ENCODE measurements at regions of chr20 and their contacts with region 1.

Region 1: DNA sequence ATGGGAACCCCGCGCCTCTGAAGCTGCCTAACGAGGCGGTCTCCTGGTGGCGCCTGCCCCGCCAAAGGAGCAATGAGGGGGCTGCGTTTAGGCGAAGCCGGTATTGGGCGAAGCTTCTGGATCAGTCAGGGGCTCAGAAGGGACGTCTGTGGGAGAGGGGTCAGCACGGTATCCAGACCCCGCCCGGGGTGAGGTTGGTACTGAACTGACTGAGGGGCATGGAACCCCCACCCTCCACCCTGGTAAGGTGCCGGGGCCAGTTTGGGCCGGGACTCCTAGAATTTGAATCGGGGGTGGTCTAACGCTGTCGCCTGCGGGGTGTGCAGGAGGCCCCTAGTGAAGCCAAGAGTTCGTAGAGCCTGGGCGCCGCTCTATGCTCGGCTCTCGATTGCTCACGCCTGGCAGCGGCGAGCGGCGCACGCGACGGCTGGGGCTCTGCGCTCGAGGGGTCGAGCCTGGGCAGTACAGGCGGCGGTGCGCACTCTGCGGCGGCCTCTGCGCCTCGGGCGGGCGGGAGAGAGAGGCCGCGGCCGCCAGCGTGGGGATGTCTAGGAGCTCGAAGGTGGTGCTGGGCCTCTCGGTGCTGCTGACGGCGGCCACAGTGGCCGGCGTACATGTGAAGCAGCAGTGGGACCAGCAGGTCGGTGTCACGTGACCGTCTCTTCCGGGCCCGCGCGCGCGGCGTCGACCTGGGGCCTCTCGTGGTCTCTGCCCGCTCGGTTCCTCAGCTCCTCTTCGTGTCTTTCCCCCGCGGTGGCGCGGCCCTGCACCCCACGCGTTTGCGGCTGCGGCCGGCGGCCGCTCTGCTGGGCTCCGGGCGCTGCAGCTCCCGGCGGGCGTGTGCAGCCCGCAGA is at the starts of genes KAT14 and PET117:
- DNase-seq: peak; percentile 93
- ATAC-seq: peak; percentile 97 to 99
- total RNA-seq, gene KAT14: 8.5 to 10.0 TPM
- total RNA-seq, gene PET117: 9.7 to 10.7 TPM

Region 2: GRCh38 chr20:17662333-17663039 is 475.2 kb before region 1 on chr20:
- intact Hi-C with region 1: loop called in 1 of 2 experiments (anchors 5 kb)
- DNase-seq: peak; percentile 73
- ATAC-seq: peak; percentile 67 to 86

Region 3: GRCh38 chr20:17955302-17955701 is 182.3 kb before region 1 on chr20:
- intact Hi-C with region 1: no loop called
- DNase-seq: no peak
- ATAC-seq: no peak

Region 4: DNA sequence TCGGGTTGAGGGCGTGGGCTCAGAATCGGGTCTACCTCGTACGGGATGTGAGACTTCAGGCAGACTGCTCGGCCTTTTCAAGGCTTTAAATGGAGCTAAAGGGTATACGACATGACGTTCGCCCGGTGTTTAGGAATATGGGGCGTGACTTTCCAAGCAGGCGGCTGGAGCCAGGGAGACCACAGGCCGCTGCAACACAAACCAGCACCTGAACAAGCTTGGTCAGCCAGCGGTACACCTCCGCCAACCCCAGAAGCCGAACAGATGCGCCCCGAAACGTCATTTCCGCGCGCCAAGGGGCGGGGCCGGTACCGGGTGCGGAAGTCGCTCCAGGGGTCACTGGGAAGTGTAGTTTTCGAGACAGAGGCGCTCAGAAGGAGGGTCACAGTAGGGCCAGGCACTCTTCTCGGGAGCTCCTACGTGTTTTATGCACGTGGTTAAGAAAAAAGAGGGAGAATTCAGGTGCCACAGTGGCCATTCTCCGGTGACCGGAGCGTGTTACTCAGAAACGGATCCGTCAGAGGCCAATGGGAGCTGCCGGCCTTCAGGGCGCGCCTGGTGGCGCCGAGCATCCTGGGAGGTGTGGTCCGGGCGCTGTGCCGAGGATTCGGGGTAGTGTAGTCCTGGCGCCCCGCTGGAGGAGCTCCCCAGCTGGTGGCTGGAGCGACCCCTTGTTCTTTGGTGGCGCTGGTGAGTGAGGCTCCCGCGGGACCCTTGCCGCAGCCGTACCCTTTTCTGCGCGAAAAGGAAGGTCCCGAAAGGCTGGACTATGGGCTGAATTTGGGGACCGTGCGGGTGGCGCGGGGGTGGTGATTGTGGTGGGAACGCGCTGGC is 150.5 kb after region 1 on chr20 and contains the start of gene ZNF133:
- intact Hi-C with region 1: loop called in 1 of 2 experiments (anchors 5 kb)
- DNase-seq: peak; percentile 97
- ATAC-seq: peak; percentile 98 to 99
- total RNA-seq, gene ZNF133: 6.7 to 7.4 TPM